Mammary epithelial cell (primary cell): ENCODE measurements at regions of chr7 and their contacts with region 1.

Region 1: DNA sequence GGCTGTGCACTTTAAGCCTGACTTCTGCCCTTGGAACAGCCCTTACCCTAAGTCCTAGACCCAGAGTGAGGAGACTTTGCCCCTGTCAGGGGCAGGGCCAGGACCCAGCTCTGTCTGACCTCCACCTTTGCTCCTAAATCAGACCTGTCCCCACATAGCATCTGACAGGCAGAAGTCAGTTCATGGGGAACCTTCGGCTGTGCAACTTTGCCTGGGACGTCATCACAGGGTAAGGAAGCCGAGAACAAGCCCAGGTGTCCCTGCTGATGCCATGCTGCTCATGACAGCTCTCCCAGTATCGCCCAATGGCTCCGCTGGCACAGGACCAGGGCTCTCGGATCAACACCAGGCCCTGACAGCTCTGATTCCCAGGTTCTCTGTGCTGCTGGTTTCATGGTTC is 55.4 kb downstream of the TNS3 start:
- DNase-seq: no peak
- H3K4me3 ChIP-seq: no peak overlapping the region
- H3K27ac ChIP-seq: no peak overlapping the region
- H3K4me1 ChIP-seq: no peaks in the 10 kb centered on the region
- H3K27me3 ChIP-seq: no peaks in the 10 kb centered on the region
- CTCF ChIP-seq: no peak

Region 2: DNA sequence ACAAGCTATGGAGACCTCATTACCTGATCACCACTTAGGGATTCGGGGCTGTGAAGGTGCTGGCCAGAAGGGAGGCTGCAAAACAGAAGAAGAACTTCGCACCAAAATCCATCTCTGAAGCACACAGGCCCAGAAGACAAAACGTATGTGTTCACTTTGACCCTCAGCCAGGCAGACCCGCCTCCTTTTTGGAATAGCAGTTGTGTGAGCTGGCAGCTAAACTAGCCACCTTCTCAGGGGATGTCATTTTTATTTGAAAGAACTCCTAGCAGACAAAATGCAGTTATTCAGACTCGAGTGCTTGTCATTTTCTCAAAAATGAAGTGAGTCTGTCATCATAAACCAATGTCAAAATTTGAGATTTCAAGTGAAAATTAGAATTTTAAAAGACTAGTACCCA is 16.3 kb before region 1 on chr7:
- CTCF ChIA-PET with region 1: no interaction called
- dilution Hi-C with region 1: no loop called
- in situ Hi-C with region 1: no loop called
- intact Hi-C with region 1: loop called (anchors 1 kb)
- DNase-seq: no peak
- H3K4me3 ChIP-seq: no peak overlapping the region
- H3K27ac ChIP-seq: no peak overlapping the region
- H3K4me1 ChIP-seq: peaks cover 6% of the 10 kb centered on the region
- H3K27me3 ChIP-seq: no peaks in the 10 kb centered on the region
- CTCF ChIP-seq: no peak